HCT116 (cell line): ENCODE measurements at regions of chr16 and their contacts with region 1.

Region 1: GRCh38 chr16:73196670-73197069 is 148.7 kb upstream of the ZFHX3 start:
- DNase-seq: peak; percentile 54
- ATAC-seq: peak; percentile 96
- H3K4me3 ChIP-seq: no peak overlapping the region
- H3K27ac ChIP-seq: no peak overlapping the region
- H3K4me1 ChIP-seq: no peaks in the 10 kb centered on the region
- H3K27me3 ChIP-seq: no peaks in the 10 kb centered on the region; the same call in 1 of the 2 replicates
- CTCF ChIP-seq: peak; percentile 57 to 74 (median 71)
- POLR2A ChIP-seq: no peak
- RAD21 ChIP-seq: peak; percentile 88

Region 2: DNA sequence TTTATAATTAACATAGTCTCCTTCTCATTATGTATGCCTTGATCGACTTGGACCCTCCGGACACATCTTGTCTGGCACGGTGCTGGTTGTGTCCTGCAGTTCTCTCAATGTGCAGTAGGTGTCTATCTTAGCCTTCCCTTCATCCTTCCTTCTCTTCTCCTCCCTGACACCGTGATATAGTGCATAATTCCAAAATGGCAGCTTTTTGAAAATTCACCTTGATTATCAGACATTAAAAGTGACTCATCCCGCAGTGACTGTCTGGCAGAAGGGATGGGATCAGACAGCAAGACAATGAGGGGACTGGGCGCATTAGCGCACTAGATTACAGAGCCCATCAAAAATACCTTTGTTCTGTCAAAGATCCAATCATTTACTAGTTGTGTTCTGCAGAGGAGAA is 954.7 kb before region 1 on chr16:
- CTCF ChIA-PET with region 1: no interaction called
- POLR2A ChIA-PET with region 1: no interaction called
- RAD21 ChIA-PET with region 1: no interaction called
- intact Hi-C with region 1: loop called (anchors 5 kb)
- DNase-seq: peak; percentile 39
- ATAC-seq: peak; percentile 99
- H3K4me3 ChIP-seq: no peak overlapping the region
- H3K27ac ChIP-seq: no peak overlapping the region
- H3K4me1 ChIP-seq: peaks cover 0 to 2% of the 10 kb centered on the region in 2 experiments; a peak in 1 of 4 replicates
- H3K27me3 ChIP-seq: no peaks in the 10 kb centered on the region
- CTCF ChIP-seq: peak; percentile 54 to 83 (median 75); a peak in 5 of 6 replicates
- POLR2A ChIP-seq: no peak
- RAD21 ChIP-seq: peak; percentile 88

Region 3: GRCh38 chr16:72847187-72848027 is 349.3 kb before region 1 on chr16:
- CTCF ChIA-PET with region 1: no interaction called
- POLR2A ChIA-PET with region 1: no interaction called
- RAD21 ChIA-PET with region 1: no interaction called
- intact Hi-C with region 1: loop called (anchors 5 kb)
- DNase-seq: no peak
- ATAC-seq: peak; percentile 82
- H3K4me3 ChIP-seq: no peak overlapping the region
- H3K27ac ChIP-seq: no peak overlapping the region
- H3K4me1 ChIP-seq: peaks cover 14 to 25% of the 10 kb centered on the region in 2 experiments
- H3K27me3 ChIP-seq: no peaks in the 10 kb centered on the region
- CTCF ChIP-seq: peak; percentile 47 to 65 (median 59); a peak in 5 of 6 replicates
- POLR2A ChIP-seq: no peak
- RAD21 ChIP-seq: peak; percentile 60

Region 4: DNA sequence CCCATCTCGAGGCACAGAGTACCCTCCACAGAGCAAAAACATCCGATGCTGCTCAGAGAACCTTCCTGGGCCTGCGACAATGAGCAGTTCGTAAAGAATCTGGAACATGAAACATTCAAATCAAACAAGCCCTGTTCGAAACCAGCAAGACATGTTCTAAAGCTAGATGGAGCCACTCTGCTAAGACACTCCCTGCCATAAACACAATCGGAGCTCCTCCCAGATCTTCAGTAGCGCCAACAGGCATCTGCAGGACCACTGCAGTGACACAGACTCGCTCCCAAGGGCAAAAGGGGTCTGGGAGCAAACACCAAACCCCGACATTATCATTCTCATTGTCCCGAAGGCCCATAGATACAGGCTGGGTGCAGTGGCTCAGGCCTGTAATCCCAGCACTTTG is 257.4 kb before region 1 on chr16:
- CTCF ChIA-PET with region 1: no interaction called
- POLR2A ChIA-PET with region 1: no interaction called
- RAD21 ChIA-PET with region 1: no interaction called
- intact Hi-C with region 1: no loop called
- DNase-seq: no peak
- ATAC-seq: peak; percentile 59
- H3K4me3 ChIP-seq: no peak overlapping the region
- H3K27ac ChIP-seq: no peak overlapping the region
- H3K4me1 ChIP-seq: peaks cover 3 to 26% of the 10 kb centered on the region in 2 experiments; a peak in 3 of 4 replicates
- H3K27me3 ChIP-seq: no peaks in the 10 kb centered on the region
- CTCF ChIP-seq: no peak
- POLR2A ChIP-seq: no peak
- RAD21 ChIP-seq: peak; percentile 18; the same call in 1 of the 2 replicates

Region 5: DNA sequence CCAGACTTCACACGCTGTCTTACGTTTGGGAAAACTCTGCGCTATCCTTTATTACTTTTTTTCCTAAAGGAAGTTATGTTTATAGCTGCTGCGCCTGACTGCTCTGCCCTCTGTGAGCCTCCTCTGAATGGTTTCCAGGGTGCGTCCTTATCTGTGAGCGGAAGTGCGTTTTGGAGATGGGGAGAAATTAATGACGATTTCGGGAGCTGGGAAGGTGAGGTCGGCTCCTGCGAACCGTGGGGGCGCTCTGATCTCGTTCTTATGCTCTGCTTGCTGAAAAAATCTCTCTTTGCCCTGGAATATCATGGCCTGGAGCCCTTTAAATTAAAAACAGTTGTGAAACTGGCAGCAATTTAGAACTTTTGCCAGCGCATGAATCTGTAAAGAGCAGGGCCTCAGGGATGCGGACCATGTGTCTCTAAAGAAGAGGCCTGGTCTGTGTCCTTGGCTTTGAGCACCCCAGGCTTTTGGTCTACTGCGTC is 13.0 kb before region 1 on chr16:
- CTCF ChIA-PET with region 1: no interaction called
- POLR2A ChIA-PET with region 1: no interaction called
- RAD21 ChIA-PET with region 1: no interaction called
- intact Hi-C with region 1: no loop called
- DNase-seq: no peak
- ATAC-seq: no peak
- H3K4me3 ChIP-seq: no peak overlapping the region
- H3K27ac ChIP-seq: no peak overlapping the region
- H3K4me1 ChIP-seq: no peaks in the 10 kb centered on the region
- H3K27me3 ChIP-seq: no peaks in the 10 kb centered on the region
- CTCF ChIP-seq: no peak
- POLR2A ChIP-seq: no peak
- RAD21 ChIP-seq: no peak